B cell (primary cell): ENCODE measurements at regions of chr5 and their contacts with region 1.

Region 1: DNA sequence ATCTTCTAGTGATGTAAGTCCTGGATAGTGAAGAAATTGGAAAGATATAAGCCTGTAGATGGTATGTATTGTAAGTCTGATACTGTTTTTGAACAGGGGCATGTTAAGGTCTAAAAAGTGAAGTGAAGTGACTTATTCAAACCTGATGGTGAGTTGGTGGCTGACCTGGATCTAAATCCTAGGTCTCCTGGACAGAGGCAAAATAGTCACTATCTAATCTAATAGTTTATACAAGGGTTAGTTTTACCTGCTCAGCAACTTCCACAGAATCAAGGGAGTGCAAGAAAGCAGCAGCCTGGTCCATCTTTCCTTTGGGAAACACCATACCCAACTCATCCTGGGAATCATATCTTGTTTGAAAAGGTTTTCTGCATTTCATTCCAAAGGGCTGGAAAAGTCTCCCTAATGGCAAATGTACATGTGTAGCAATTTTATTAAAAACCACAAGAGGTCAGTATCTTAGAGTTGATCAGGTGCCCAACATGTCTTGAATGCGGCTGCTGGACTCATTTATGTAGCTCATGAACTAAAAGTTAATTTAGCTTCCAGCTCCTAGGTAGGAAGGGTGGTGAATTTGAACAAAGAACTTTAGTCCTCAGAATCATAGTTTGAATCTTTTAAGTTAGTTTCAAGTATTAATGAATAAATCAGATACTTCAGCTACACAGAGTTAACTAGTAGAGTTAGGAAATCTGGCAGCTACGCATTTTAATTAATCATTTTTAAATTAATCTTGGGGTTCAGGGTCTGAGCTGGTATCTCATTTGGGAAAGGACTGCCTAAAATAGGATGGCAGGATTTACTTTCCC is 26.0 kb downstream of the SKP2 start:
- DNase-seq: peak; percentile 11
- ATAC-seq: no peak
- H3K4me3 ChIP-seq: no peak overlapping the region
- H3K4me3 Mint-ChIP-seq: no peak overlapping the region
- H3K27ac ChIP-seq: no peak overlapping the region
- H3K27ac Mint-ChIP-seq: no peak overlapping the region
- H3K4me1 ChIP-seq: no peaks in the 10 kb centered on the region
- H3K4me1 Mint-ChIP-seq: peaks cover 2% of the 10 kb centered on the region
- H3K27me3 ChIP-seq: no peaks in the 10 kb centered on the region
- H3K27me3 Mint-ChIP-seq: no peaks in the 10 kb centered on the region
- CTCF ChIP-seq: peak; percentile 22

Region 2: DNA sequence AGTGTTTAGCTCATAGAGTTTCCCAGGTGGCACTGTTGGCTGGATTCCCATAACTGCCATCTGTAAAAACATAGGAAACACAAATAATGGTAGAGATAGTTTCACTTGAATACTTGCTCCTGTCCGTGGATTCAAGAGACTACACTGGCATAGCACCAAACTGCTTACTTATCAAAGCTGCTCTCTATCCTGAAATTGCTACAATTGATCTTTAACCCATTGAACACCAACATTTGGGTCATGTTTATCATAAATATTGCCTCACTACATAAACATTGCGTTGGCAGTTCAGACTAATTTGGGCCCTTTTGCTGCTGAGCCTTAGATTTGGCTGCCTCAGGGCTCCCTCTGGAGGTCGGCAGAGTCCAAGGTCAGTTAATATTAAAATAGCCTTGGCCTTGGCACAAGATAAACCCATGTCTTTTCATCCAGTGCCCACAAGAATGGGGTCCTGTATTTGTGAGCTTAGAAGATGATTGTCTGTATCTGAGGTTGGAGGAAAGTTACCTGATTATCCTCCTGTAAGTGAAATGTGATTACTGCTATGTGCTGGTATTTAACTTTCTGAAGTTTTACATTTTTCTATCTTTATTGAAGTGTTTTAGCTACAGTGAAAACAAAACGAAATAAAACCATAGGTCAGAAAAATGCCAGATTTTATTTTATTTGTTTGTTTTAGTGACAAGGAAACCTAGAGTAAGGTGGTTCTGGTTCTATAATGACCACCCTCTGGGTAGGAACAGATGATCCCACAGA is 127.8 kb after region 1 on chr5:
- CTCF ChIA-PET with region 1: interaction called, 4 read pairs
- POLR2A ChIA-PET with region 1: no interaction called
- intact Hi-C with region 1: loop called (anchors 1 kb)
- DNase-seq: peak; percentile 25
- ATAC-seq: peak; percentile 41
- H3K4me3 ChIP-seq: no peak overlapping the region
- H3K4me3 Mint-ChIP-seq: no peak overlapping the region
- H3K27ac ChIP-seq: no peak overlapping the region
- H3K27ac Mint-ChIP-seq: no peak overlapping the region
- H3K4me1 ChIP-seq: no peaks in the 10 kb centered on the region
- H3K4me1 Mint-ChIP-seq: peaks cover 8% of the 10 kb centered on the region
- H3K27me3 ChIP-seq: no peaks in the 10 kb centered on the region
- H3K27me3 Mint-ChIP-seq: no peaks in the 10 kb centered on the region
- CTCF ChIP-seq: peak; percentile 46

Region 3: DNA sequence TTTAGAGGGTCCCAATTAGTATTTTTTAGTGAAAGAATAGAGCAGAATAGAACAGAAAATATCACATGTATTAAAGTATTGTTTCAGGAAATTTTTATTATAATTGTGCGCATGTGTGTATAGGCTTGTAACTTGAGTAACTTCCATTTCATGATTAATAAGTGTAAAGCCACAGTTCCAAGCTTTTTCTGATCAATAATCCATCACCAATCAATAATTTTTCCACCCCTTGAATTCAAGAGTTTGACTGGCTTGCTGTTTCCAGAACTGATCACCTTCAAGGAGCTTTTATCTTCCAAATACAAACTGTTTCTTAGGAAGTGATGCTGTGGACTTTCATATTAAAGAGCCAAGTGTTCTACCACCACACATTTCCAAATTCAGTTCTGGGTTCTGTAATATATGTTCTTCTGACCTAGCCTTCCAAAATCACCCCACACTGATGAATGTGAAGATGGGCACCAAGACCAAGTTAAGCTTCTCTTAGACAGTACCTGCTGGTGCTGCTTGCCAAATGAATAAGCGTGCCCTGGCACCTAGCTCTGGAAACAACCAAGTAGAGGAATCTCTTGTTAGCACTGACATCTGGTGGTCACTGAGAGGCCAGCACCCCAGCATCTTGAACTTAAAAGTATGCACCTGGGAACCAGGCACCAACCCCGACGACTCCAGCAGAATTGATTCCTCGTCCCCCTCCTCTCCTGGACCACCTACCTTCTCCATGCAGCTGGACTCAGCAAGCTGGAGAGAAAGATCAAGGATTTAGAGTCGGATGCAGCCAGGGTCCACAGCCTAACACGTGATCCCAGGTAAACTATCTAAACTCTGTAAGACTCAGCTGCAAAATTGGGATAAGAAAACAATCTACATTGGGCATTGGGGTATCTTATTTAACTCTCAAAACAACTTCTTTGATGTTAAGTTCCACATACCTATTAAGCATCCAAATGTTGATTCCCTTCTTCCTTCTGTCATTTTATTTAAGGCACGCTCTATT is 518.1 kb after region 1 on chr5:
- CTCF ChIA-PET with region 1: interaction called, 4 read pairs
- POLR2A ChIA-PET with region 1: no interaction called
- intact Hi-C with region 1: loop called (anchors 2 kb)
- DNase-seq: peak; percentile 59
- ATAC-seq: peak; percentile 52
- H3K4me3 ChIP-seq: no peak overlapping the region
- H3K4me3 Mint-ChIP-seq: no peak overlapping the region
- H3K27ac ChIP-seq: no peak overlapping the region
- H3K27ac Mint-ChIP-seq: peak overlapping the region; percentile 4
- H3K4me1 ChIP-seq: peaks cover 23 to 25% of the 10 kb centered on the region in 2 donors
- H3K4me1 Mint-ChIP-seq: peaks cover 28% of the 10 kb centered on the region
- H3K27me3 ChIP-seq: no peaks in the 10 kb centered on the region
- H3K27me3 Mint-ChIP-seq: peaks cover 4% of the 10 kb centered on the region
- CTCF ChIP-seq: peak; percentile 72